ENCODE measurements at regions of chr13 and their contacts with region 1.

Region 1: DNA sequence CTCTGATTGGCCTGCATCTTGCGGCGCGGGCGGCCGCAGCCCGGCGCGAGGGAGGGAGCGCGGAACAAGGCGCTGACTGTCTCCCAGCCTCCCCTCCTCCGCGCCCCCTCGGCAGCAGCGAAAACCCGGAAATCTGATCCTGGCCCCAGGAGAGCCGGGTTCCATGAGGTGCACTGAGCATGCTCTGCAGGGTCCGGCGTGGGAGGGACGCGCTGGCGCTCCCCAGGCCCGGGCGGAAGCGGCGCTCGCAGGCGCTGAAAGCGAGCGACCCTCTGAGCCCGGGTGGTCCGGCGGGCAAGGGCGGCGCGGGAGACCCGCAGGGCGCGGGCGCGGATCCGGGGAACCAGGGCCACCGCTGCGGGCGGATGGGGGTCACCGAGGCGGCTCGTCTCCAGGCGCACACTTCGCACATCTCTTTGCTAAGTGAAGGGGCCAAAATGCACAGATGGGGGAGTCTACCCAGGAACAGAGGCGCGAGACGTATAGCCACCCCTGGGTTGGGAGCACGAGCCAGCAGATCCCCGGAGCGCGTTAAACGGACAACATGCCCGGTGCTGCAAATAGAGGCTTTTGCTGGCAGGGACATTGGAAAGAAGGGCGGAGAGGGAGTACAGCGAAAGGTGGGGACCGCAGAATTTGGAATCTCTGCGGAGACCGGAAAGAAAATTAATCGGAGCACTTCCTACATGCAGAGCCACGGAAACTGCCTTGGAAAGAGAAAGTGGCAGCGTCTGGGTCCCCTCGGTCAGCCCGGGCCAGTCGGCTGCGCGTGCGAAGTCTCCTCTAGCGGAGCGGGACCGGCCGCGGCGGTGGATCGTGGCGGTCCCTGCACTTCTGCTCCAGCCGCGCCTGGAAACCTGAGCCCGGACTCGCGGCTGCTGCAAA is 510 bp upstream of the PCDH9 start:
- DNase-seq: peak; percentile 94
- H3K4me3 ChIP-seq: peak overlapping the region; percentile 82 to 94 (median 84)
- H3K27ac ChIP-seq: peak overlapping the region; percentile 58
- H3K4me1 ChIP-seq: peaks cover 8% of the 10 kb centered on the region
- H3K27me3 ChIP-seq: peaks cover 4% of the 10 kb centered on the region
- CTCF ChIP-seq: no peak

Region 2: DNA sequence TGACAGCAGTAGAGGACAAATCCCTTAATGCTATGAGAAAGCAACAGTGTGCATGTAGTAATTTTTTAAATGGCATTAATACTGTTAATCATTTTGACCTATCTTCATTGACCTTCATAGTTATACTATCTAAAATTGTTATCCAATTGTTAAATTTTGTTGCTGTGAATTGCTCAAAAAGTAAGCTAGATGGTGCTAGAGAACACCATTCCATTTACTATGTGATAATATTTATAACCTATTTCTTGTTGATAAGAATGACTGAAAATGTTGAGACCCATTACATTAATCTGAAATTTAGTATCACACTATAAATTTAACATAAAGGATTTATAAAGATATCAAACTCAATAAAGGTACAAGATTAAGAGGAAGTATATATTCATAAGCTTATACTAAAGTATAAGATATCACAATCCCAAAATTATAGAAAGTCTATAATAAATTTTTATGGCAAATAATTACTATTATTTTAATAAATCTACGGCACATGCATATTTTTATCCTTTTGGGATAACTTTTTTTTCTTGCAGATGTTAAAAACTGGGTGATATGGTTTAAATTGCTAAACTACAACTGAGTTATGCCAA is 1573.8 kb before region 1 on chr13:
- CTCF ChIA-PET with region 1: no interaction called
- dilution Hi-C with region 1: no loop called
- in situ Hi-C with region 1: loop called in 1 of 2 experiments (anchors 25 kb)
- intact Hi-C with region 1: no loop called
- DNase-seq: no peak
- H3K4me3 ChIP-seq: no peak overlapping the region
- H3K27ac ChIP-seq: no peak overlapping the region
- H3K4me1 ChIP-seq: no peaks in the 10 kb centered on the region
- H3K27me3 ChIP-seq: no peaks in the 10 kb centered on the region
- CTCF ChIP-seq: peak; percentile 46 to 60

Region 3: GRCh38 chr13:66875264-66875663 is 355.4 kb before region 1 on chr13:
- CTCF ChIA-PET with region 1: no interaction called
- dilution Hi-C with region 1: no loop called
- in situ Hi-C with region 1: no loop called
- intact Hi-C with region 1: no loop called
- DNase-seq: no peak
- H3K4me3 ChIP-seq: no peak overlapping the region
- H3K27ac ChIP-seq: no peak overlapping the region
- H3K4me1 ChIP-seq: no peaks in the 10 kb centered on the region
- H3K27me3 ChIP-seq: no peaks in the 10 kb centered on the region
- CTCF ChIP-seq: no peak

Region 4: GRCh38 chr13:67123165-67123564 is 107.5 kb before region 1 on chr13:
- CTCF ChIA-PET with region 1: no interaction called
- dilution Hi-C with region 1: no loop called
- in situ Hi-C with region 1: no loop called
- intact Hi-C with region 1: no loop called
- DNase-seq: no peak
- H3K4me3 ChIP-seq: no peak overlapping the region
- H3K27ac ChIP-seq: no peak overlapping the region
- H3K4me1 ChIP-seq: peaks cover 28% of the 10 kb centered on the region
- H3K27me3 ChIP-seq: no peaks in the 10 kb centered on the region
- CTCF ChIP-seq: no peak

Region 5: GRCh38 chr13:67343777-67344176 is 113.1 kb after region 1 on chr13:
- CTCF ChIA-PET with region 1: no interaction called
- dilution Hi-C with region 1: no loop called
- in situ Hi-C with region 1: no loop called
- intact Hi-C with region 1: loop called (anchors 10 kb)
- DNase-seq: peak; percentile 6
- H3K4me3 ChIP-seq: no peak overlapping the region
- H3K27ac ChIP-seq: no peak overlapping the region
- H3K4me1 ChIP-seq: no peaks in the 10 kb centered on the region
- H3K27me3 ChIP-seq: no peaks in the 10 kb centered on the region
- CTCF ChIP-seq: peak in 1 of 2 donors; percentile 34

Region 6: DNA sequence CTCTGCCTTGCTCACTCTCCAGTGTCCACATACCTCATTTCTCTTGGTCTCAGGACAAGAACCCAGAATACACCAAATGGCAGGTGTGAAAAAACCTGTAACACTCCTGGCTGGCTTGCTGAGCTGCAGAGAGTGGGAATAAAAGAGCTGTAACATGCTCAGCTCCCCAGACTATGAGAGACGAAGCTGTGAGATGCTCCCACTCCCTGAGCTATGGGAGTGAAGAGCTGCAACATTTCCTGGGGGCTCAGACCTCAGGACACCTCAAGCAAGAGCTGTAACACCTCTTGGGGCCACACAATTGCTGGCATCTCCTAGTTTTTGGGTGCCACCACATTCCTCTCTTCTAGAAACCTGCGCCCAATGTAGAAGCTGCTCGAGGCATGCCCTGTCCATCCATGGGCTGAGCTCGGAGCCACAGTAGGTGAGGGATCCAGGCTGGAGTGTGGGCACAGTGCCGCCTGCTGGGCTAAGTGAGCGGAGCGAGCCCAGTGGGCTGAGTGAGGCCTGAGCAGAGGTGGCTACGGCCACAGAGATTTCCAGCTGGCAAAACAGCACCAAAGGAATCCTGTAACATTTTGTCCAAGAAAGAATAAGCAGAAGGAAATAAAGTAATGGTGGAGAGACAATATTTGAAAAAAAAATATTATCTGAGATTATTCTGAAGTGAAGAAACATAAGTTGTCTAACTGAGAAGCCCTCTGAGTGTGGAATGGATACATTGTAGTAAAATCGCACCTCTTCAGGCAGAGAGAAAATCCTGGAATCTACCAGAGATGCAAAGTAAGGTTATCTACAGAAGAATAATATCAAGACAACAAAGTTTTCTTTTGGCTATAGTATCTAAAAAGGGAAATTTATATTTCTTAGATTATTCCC is 185.6 kb after region 1 on chr13:
- CTCF ChIA-PET with region 1: no interaction called
- dilution Hi-C with region 1: no loop called
- in situ Hi-C with region 1: no loop called
- intact Hi-C with region 1: loop called (anchors 10 kb)
- DNase-seq: peak; percentile 2
- H3K4me3 ChIP-seq: no peak overlapping the region
- H3K27ac ChIP-seq: no peak overlapping the region
- H3K4me1 ChIP-seq: no peaks in the 10 kb centered on the region
- H3K27me3 ChIP-seq: no peaks in the 10 kb centered on the region
- CTCF ChIP-seq: peak; percentile 73 to 80